ENCODE measurements at regions of chr18 and their contacts with region 1.

Region 1: DNA sequence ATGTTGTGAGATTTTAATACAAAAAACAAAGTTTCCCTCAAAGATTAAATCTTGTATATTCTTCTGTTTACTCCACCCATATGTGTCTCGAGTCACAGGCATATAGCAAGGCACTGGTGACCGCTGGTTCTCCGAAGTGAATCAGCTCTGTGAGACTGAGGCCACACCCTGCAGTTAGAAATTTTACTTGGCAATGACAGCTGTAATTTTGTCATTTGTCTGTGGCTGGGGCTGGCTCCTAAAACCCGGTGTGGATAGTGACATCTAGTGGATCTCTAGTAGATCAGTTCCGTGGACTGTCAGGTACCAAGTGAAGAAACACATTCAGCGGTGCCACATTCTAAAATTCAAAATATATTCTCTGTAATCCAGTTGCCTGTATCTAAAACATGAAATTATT is 278.0 kb downstream of the NEDD4L start:
- DNase-seq: peak; percentile 24 to 80 (median 48)
- ATAC-seq: peak; percentile 96
- H3K4me3 ChIP-seq: no peak overlapping the region
- H3K4me3 Mint-ChIP-seq: peak overlapping the region; percentile 72
- H3K27ac ChIP-seq: no peak overlapping the region
- H3K27ac Mint-ChIP-seq: peak overlapping the region; percentile 83
- H3K4me1 ChIP-seq: peaks cover 11% of the 10 kb centered on the region
- H3K4me1 Mint-ChIP-seq: peaks cover 21% of the 10 kb centered on the region
- H3K27me3 ChIP-seq: no peaks in the 10 kb centered on the region
- H3K27me3 Mint-ChIP-seq: no peaks in the 10 kb centered on the region
- CTCF ChIP-seq: peak; percentile 52

Region 2: GRCh38 chr18:57618910-57619309 is 703.1 kb before region 1 on chr18:
- CTCF ChIA-PET with region 1: no interaction called
- POLR2A ChIA-PET with region 1: no interaction called
- intact Hi-C with region 1: no loop called
- DNase-seq: peak in 1 of 14 experiments; percentile 15
- ATAC-seq: no peak
- H3K4me3 ChIP-seq: no peak overlapping the region
- H3K4me3 Mint-ChIP-seq: no peak overlapping the region
- H3K27ac ChIP-seq: no peak overlapping the region
- H3K27ac Mint-ChIP-seq: peak overlapping the region; percentile 51
- H3K4me1 ChIP-seq: peaks cover 33% of the 10 kb centered on the region
- H3K4me1 Mint-ChIP-seq: peaks cover 38% of the 10 kb centered on the region
- H3K27me3 ChIP-seq: no peaks in the 10 kb centered on the region
- H3K27me3 Mint-ChIP-seq: no peaks in the 10 kb centered on the region
- CTCF ChIP-seq: no peak

Region 3: DNA sequence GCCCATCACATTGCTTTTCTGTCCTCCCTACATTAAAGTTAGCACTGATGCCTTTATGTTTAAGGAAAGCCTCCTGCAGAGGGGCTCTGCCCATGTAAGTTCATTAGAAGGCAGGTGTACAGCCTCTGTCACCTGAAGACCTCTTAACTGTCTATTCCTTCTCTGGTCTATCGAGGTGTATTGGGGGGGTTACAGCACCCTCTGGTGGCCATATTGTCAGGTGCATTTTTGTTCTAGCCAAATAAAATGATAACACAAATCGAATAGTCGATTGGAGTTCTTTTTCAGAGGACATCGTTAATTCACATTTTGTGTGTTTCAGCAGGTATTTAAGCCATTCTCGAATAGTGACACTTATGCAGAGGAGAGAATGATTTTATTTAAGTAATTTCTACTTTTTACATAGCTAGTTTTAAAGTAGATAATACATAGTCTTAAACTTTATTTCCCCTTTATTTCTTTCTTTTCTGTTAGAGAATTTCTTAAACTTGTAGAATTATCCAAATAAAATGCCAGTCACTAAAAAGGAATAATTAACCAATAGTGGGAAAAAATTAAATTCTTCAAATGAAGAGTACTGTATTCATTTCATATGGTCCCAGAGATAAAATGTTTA is 141.1 kb before region 1 on chr18:
- CTCF ChIA-PET with region 1: no interaction called
- POLR2A ChIA-PET with region 1: no interaction called
- intact Hi-C with region 1: loop called (anchors 2 to 5 kb)
- DNase-seq: peak; percentile 33 to 77 (median 54)
- ATAC-seq: peak; percentile 51
- H3K4me3 ChIP-seq: no peak overlapping the region
- H3K4me3 Mint-ChIP-seq: no peak overlapping the region
- H3K27ac ChIP-seq: no peak overlapping the region
- H3K27ac Mint-ChIP-seq: no peak overlapping the region
- H3K4me1 ChIP-seq: no peaks in the 10 kb centered on the region
- H3K4me1 Mint-ChIP-seq: no peaks in the 10 kb centered on the region
- H3K27me3 ChIP-seq: no peaks in the 10 kb centered on the region
- H3K27me3 Mint-ChIP-seq: peaks cover 6% of the 10 kb centered on the region
- CTCF ChIP-seq: peak; percentile 85

Region 4: DNA sequence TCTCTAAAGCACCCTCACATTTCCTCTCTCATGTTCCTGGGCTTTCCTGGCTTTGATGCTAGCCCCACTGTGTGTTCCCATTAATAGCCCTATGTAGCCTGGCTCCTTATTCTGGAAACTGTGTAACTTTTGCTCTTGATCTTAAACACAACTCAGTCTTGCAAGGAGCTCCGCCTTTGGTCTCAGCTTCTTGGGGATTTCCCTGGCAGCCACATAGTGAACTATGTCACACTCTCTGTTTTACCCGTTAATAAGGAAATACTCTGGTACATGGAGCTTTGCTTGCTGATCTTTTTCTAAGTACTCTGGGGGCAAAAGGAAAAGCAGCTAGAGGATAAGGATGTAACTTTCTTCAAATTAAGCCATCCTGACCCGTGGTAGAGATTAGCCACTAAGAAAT is 18.6 kb before region 1 on chr18:
- CTCF ChIA-PET with region 1: interaction called, 4 read pairs
- POLR2A ChIA-PET with region 1: interaction called, 7 read pairs
- intact Hi-C with region 1: loop called in 1 of 2 experiments (anchors 2 kb)
- DNase-seq: peak in 5 of 14 experiments; percentile 16 to 71 (median 52)
- ATAC-seq: peak; percentile 89
- H3K4me3 ChIP-seq: no peak overlapping the region
- H3K4me3 Mint-ChIP-seq: peak overlapping the region; percentile 37
- H3K27ac ChIP-seq: peak overlapping the region in 1 of 2 donors; percentile 18
- H3K27ac Mint-ChIP-seq: peak overlapping the region; percentile 64
- H3K4me1 ChIP-seq: peaks cover 18% of the 10 kb centered on the region
- H3K4me1 Mint-ChIP-seq: peaks cover 30% of the 10 kb centered on the region
- H3K27me3 ChIP-seq: no peaks in the 10 kb centered on the region
- H3K27me3 Mint-ChIP-seq: no peaks in the 10 kb centered on the region
- CTCF ChIP-seq: no peak

Region 5: GRCh38 chr18:58416704-58417683 is 95.0 kb after region 1 on chr18:
- CTCF ChIA-PET with region 1: no interaction called
- POLR2A ChIA-PET with region 1: no interaction called
- intact Hi-C with region 1: no loop called
- DNase-seq: no peak
- ATAC-seq: no peak
- H3K4me3 ChIP-seq: no peak overlapping the region
- H3K4me3 Mint-ChIP-seq: no peak overlapping the region
- H3K27ac ChIP-seq: no peak overlapping the region
- H3K27ac Mint-ChIP-seq: no peak overlapping the region
- H3K4me1 ChIP-seq: no peaks in the 10 kb centered on the region
- H3K4me1 Mint-ChIP-seq: no peaks in the 10 kb centered on the region
- H3K27me3 ChIP-seq: peaks cover 0 to 4% of the 10 kb centered on the region in 2 experiments
- H3K27me3 Mint-ChIP-seq: no peaks in the 10 kb centered on the region
- CTCF ChIP-seq: no peak

Region 6: DNA sequence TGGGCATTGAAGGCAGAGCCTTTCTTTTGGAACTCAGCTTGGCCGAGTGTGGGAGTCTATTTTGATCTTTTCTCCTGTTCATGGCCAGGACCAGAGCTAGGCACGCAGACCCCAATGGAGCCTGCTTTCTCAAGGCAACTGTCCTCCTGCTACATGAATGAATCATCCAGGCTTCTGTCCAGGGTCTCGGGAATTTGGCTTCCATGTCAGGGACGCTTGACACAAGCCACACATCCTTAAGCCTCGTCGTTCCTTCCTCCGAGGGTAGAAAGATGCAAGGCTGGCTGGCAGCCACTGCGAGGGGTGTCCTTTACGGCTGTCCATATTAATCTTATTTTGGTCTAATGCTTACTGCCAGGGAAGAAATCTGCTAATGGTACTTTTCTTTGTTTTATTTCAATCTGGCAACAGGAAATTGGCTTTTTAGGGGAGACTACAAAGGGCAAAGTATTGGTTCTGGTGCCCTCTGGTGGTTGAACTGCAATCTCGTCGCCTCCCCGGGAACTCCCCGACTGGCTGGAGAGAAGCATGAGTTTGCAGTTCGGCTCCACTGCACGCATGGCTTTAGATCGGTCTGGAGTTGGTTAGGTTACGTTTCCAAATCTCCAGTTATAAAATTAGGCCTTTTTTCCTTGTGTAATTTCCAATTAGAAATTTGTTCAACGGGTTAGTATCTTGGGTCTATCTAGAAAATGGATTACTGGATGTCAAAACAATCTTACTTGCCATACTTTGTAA is 171.7 kb after region 1 on chr18:
- CTCF ChIA-PET with region 1: no interaction called
- POLR2A ChIA-PET with region 1: no interaction called
- intact Hi-C with region 1: loop called in 1 of 2 experiments (anchors 10 kb)
- DNase-seq: peak; percentile 48 to 83 (median 58)
- ATAC-seq: peak; percentile 96
- H3K4me3 ChIP-seq: no peak overlapping the region
- H3K4me3 Mint-ChIP-seq: no peak overlapping the region
- H3K27ac ChIP-seq: no peak overlapping the region
- H3K27ac Mint-ChIP-seq: no peak overlapping the region
- H3K4me1 ChIP-seq: peaks cover 6% of the 10 kb centered on the region
- H3K4me1 Mint-ChIP-seq: peaks cover 7% of the 10 kb centered on the region
- H3K27me3 ChIP-seq: peaks cover 2 to 6% of the 10 kb centered on the region in 2 experiments
- H3K27me3 Mint-ChIP-seq: peaks cover 38% of the 10 kb centered on the region
- CTCF ChIP-seq: peak; percentile 86